GM10248 (cell line): ENCODE measurements at regions of chr2 and their contacts with region 1.

Region 1: GRCh38 chr2:64595397-64596160 is 58.1 kb downstream of the SERTAD2 start:
- DNase-seq: no peak
- CTCF ChIP-seq: no peak

Region 2: DNA sequence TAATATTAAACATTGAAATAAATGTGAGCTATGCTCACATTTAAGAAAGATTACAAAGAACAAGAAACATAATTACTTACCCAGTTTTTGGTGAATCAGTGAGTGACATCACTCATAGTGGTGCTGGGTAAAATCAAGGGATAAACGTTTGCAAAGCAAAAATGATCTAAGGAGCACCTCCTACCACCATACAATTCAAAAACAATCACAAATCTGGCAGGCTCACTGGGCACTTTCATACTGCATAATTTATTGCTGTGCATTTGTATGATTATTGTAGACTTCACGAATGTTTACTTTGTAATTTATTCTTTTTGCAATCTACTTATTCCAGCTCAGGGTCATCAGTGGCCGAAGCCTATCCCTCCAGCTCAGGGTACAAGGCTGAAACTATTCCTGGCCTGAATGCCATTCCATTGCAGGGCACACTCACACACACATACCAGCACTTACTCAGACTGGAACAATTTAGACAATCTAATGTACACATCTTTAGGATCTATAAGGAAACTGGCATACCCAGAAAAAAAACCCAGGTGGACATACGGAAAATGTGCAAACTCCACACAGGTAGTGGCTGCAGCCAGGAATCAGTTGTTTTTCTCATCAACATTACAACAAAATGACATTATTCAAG is 37.0 kb before region 1 on chr2:
- CTCF ChIA-PET with region 1: no interaction called
- POLR2A ChIA-PET with region 1: no interaction called
- DNase-seq: no peak
- CTCF ChIP-seq: no peak

Region 3: GRCh38 chr2:64609227-64609941 is 13.8 kb after region 1 on chr2:
- CTCF ChIA-PET with region 1: interaction called, 81 read pairs
- POLR2A ChIA-PET with region 1: no interaction called
- DNase-seq: peak; percentile 91
- CTCF ChIP-seq: peak; percentile 82

Region 4: GRCh38 chr2:64873472-64873924 is 277.9 kb after region 1 on chr2:
- CTCF ChIA-PET with region 1: interaction called, 10 read pairs
- POLR2A ChIA-PET with region 1: no interaction called
- DNase-seq: peak; percentile 83
- CTCF ChIP-seq: peak; percentile 98